Spleen (tissue), 13 donors: ENCODE measurements at regions of chr17 and their contacts with region 1.

Region 1: GRCh38 chr17:82781894-82782274 is 30.0 kb downstream of the TBCD start:
- DNase-seq: peak; percentile 97
- H3K4me3 ChIP-seq: peak overlapping the region in 1 of 8 donors; percentile 25
- H3K27ac ChIP-seq: peak overlapping the region in 6 of 8 donors; percentile 26 to 66 (median 50)
- H3K4me1 ChIP-seq: peaks cover 4 to 40% (median 27%) of the 10 kb centered on the region in 6 donors
- H3K27me3 ChIP-seq: no peaks in the 10 kb centered on the region
- CTCF ChIP-seq: peak; percentile 96 to 99 (median 97)
- POLR2A ChIP-seq: no peak

Region 2: DNA sequence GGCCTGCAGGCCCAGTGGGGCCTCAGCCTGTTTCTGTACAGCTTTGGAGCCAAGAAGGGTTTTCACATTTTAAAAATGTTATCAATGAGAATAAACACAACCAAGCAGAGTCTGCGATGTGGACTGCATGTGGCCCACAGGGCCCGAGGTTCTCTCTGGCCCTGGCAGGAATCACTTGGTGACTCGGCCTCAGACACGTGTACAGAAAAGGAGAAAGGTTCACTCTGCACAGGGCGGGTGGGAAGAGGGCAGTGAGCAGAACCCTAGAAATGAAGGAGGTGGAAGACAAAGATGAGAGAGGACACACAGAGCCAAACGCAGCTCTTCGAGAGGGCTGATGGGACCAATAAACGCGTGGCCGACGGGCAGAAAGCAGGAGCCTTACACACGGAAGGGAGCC is 69.5 kb after region 1 on chr17:
- intact Hi-C with region 1: loop called (anchors 5 kb)
- DNase-seq: no peak
- H3K4me3 ChIP-seq: no peak overlapping the region
- H3K27ac ChIP-seq: no peak overlapping the region
- H3K4me1 ChIP-seq: peaks cover 2 to 34% (median 15%) of the 10 kb centered on the region in 6 donors
- H3K27me3 ChIP-seq: no peaks in the 10 kb centered on the region
- CTCF ChIP-seq: no peak
- POLR2A ChIP-seq: no peak

Region 3: GRCh38 chr17:82917691-82918345 is 135.9 kb after region 1 on chr17:
- intact Hi-C with region 1: loop called (anchors 5 kb)
- DNase-seq: no peak
- H3K4me3 ChIP-seq: no peak overlapping the region
- H3K27ac ChIP-seq: no peak overlapping the region
- H3K4me1 ChIP-seq: peaks cover 9 to 39% (median 13%) of the 10 kb centered on the region in 6 donors
- H3K27me3 ChIP-seq: no peaks in the 10 kb centered on the region
- CTCF ChIP-seq: peak in 8 of 11 experiments; percentile 16 to 65 (median 48)
- POLR2A ChIP-seq: no peak